ENCODE measurements at regions of chr9 and their contacts with region 1.

Region 1: DNA sequence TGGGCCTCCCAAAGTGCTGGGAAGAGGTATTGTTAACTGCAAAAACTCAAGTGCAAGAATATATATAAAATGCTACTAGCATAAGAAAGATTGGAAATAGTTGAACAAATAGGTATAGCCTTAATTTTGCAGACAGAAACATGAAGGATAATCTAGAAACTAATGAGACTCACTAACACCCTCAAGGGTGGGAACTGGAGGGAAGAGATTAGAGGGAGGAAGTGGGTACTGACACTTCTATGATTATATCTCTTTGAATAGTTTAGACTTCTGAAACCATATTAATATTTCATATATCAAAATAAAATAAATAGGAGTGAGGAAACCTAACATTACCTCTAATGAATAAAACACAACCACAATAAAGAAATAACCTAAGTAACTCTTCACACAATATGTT is 23.0 kb downstream of the AUH start:
- DNase-seq: no peak
- ATAC-seq: no peak
- H3K4me3 ChIP-seq: no peak overlapping the region
- H3K27ac ChIP-seq: no peak overlapping the region
- H3K4me1 ChIP-seq: peaks cover 4 to 18% of the 10 kb centered on the region in 2 experiments; a peak in 3 of 4 replicates
- H3K27me3 ChIP-seq: no peaks in the 10 kb centered on the region
- CTCF ChIP-seq: no peak
- POLR2A ChIP-seq: no peak
- RAD21 ChIP-seq: no peak

Region 2: DNA sequence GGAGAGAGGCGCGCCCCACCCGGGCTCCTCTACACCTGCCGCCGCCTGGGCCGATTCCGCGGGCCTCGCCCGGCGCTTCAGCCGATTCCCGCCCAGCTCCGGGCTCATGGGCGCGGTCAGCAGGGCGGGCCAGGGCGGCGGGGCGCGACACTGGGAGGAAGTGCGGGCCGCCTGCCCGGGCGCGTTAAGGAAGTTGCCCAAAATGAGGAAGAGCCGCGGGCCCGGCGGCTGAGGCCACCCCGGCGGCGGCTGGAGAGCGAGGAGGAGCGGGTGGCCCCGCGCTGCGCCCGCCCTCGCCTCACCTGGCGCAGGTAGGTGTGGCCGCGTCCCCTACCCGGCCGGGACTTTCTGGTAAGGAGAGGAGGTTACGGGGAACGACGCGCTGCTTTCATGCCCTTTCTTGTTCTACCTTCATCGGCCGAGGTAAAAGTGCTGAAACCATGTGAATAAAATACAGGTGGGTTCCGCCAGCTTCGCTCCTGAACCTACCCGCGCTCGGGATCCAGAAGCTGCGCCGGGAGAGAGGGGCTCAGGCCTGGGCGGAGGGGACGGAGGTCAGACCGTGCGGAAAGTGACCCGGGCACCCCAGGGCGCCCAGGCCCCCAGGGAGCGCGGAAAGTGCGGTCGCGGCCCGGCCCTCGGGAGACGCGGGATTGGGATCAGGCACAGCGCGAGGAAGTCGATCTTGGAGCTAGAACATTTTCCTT is 536.9 kb before region 1 on chr9 and contains the start of gene SYK:
- CTCF ChIA-PET with region 1: no interaction called
- POLR2A ChIA-PET with region 1: no interaction called
- RAD21 ChIA-PET with region 1: no interaction called
- intact Hi-C with region 1: no loop called
- DNase-seq: no peak
- ATAC-seq: peak; percentile 84
- H3K4me3 ChIP-seq: peak within 1 kb of the TSS; percentile 50 to 57
- H3K27ac ChIP-seq: peak within 1 kb of the TSS; percentile 31; the same call in 1 of the 2 replicates
- H3K4me1 ChIP-seq: peaks cover 3 to 16% of the 10 kb centered on the region in 2 experiments
- H3K27me3 ChIP-seq: 0 out of 2 replicates have a peak, but pooled peaks cover 7% of the 10 kb centered on the region
- CTCF ChIP-seq: no peak
- POLR2A ChIP-seq: no peak
- RAD21 ChIP-seq: no peak
- total RNA-seq, gene SYK: 9.0 TPM

Region 3: GRCh38 chr9:91308191-91308590 is 30.5 kb before region 1 on chr9:
- CTCF ChIA-PET with region 1: no interaction called
- POLR2A ChIA-PET with region 1: no interaction called
- RAD21 ChIA-PET with region 1: no interaction called
- intact Hi-C with region 1: no loop called
- DNase-seq: no peak
- ATAC-seq: no peak
- H3K4me3 ChIP-seq: no peak overlapping the region
- H3K27ac ChIP-seq: no peak overlapping the region
- H3K4me1 ChIP-seq: peaks cover 42 to 67% of the 10 kb centered on the region in 2 experiments
- H3K27me3 ChIP-seq: no peaks in the 10 kb centered on the region
- CTCF ChIP-seq: no peak
- POLR2A ChIP-seq: no peak
- RAD21 ChIP-seq: no peak

Region 4: DNA sequence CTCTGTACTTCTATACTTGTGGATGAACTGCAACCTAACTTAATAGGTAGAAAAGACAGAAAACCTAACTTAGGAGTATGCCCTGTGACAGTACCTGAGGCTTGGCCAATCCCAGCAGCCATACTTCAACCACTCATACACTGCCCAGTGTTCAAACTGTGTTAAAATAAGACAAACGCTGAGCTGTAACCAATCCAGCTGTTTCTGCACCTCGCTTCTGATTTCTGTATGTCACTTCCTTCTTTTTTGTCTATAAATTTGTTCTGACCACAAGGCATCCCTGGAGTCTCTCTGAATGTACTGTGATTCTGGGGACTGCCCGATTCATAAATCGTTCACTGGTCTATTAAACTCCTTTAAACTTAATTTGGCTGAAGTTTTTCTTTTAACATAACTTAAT is 18.4 kb before region 1 on chr9:
- CTCF ChIA-PET with region 1: no interaction called
- POLR2A ChIA-PET with region 1: no interaction called
- RAD21 ChIA-PET with region 1: no interaction called
- intact Hi-C with region 1: loop called (anchors 2 kb)
- DNase-seq: no peak
- ATAC-seq: no peak
- H3K4me3 ChIP-seq: no peak overlapping the region
- H3K27ac ChIP-seq: no peak overlapping the region
- H3K4me1 ChIP-seq: peaks cover 1 to 2% of the 10 kb centered on the region in 2 experiments; a peak in 2 of 4 replicates
- H3K27me3 ChIP-seq: no peaks in the 10 kb centered on the region
- CTCF ChIP-seq: no peak
- POLR2A ChIP-seq: no peak
- RAD21 ChIP-seq: no peak